Gastrocnemius medialis (tissue), 4 donors: ENCODE measurements at regions of chr4 and their contacts with region 1.

Region 1: GRCh38 chr4:69881173-69881773 is 21.3 kb upstream of the SULT1E1 start:
- DNase-seq: peak in 1 of 2 donors; percentile 2
- ATAC-seq: no peak
- H3K4me3 ChIP-seq: no peak overlapping the region
- H3K27ac ChIP-seq: no peak overlapping the region
- H3K4me1 ChIP-seq: no peaks in the 10 kb centered on the region
- H3K27me3 ChIP-seq: no peaks in the 10 kb centered on the region
- CTCF ChIP-seq: peak in 3 of 5 experiments; percentile 25 to 41 (median 31)
- POLR2A ChIP-seq: no peak

Region 2: DNA sequence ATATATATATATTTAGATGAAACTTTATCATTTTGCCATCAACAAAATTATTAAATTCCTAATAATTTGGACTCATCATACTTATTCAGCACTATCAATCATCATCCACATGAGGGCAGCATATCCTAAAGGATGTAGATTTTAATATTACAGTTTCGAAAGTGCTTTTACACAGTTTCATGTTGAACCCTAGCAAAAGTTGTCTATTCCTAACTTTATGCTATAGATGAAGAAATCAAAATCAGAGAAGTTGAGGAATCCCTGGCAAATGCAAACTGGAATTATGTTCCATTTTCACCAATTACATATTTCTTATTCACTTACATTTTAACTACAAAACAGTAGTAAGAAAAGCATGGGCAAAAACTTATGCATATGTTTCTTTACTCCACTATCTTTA is 191.7 kb before region 1 on chr4:
- in situ Hi-C with region 1: loop called in 3 of 4 experiments (anchors 5 to 25 kb)
- intact Hi-C with region 1: no loop called
- DNase-seq: no peak
- ATAC-seq: no peak
- H3K4me3 ChIP-seq: no peak overlapping the region
- H3K27ac ChIP-seq: no peak overlapping the region
- H3K4me1 ChIP-seq: no peaks in the 10 kb centered on the region
- H3K27me3 ChIP-seq: no peaks in the 10 kb centered on the region
- CTCF ChIP-seq: peak in 3 of 5 experiments; percentile 13 to 39 (median 15)
- POLR2A ChIP-seq: no peak

Region 3: DNA sequence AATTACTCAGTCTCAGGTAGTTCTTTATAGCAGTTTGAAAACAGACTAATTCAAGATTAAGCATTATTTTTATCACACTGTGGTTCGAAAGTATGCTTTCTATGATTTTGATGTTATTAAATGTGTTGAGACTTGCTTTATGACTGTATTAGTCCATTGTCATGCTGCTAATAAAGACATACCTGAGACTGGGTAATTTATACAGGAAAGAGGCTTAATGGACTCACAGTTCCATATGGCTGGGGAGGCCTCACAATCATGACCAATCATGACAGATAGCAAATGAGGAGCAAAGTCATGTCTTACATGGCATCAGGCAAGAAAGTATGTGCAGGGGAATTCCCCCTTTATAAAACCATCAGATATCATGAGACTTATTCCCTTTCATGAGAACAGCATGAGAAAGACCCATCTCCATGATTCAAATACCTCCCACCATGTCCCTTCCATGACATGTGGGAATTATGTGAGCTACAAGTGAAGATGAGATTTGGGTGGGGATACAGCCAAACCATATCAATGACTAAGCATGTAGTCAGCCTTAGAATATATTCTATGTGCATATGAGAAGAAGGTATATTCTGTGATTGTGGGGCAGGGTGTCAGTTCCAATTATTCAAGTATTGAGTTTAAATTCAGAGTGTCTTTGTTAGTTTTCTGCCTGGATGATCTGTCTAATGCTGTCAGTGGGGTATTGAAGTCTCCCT is 183.6 kb before region 1 on chr4:
- in situ Hi-C with region 1: loop called in 2 of 4 experiments (anchors 10 to 25 kb)
- intact Hi-C with region 1: no loop called
- DNase-seq: no peak
- ATAC-seq: no peak
- H3K4me3 ChIP-seq: no peak overlapping the region
- H3K27ac ChIP-seq: no peak overlapping the region
- H3K4me1 ChIP-seq: no peaks in the 10 kb centered on the region
- H3K27me3 ChIP-seq: no peaks in the 10 kb centered on the region
- CTCF ChIP-seq: no peak
- POLR2A ChIP-seq: no peak

Region 4: DNA sequence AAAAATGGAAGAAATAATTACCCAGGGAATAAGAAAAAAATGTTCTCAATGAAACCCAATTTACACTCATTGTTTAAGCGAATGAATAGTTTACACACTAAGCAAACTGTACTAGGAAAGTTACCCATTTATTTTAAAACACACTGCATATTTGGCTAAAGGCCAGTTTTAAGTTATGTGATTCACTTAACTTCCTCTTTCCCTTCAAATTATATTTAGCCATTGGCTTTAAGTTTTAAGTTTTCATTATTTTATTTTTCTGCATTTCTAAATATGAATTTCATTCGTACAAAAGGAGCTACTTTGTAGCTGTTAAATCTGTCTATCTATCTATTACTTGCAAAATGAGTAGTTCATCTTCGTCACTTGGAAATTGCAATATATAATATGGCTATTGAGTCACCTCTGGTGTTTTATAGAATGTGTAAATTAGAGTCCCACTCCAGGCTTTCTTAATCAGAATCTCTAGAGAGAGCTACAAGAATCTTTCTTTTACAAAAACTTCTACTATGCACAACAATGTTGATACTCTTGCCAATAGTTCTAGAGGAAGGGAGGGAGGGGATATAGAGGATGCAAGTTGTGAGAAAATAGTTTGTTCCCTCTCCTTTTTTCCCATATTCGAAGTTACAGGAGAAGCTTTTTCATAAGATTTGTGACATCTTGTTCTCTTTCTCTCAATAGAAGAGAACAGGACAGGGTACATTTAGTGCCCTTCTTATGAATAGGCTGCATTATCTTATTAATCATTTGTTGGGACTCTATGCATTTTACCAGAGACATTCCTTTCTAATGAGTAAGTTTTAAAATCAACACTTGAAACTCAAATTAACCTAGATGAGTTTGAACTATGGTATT is 162.6 kb before region 1 on chr4:
- in situ Hi-C with region 1: no loop called
- intact Hi-C with region 1: no loop called
- DNase-seq: no peak
- ATAC-seq: no peak
- H3K4me3 ChIP-seq: no peak overlapping the region
- H3K27ac ChIP-seq: no peak overlapping the region
- H3K4me1 ChIP-seq: no peaks in the 10 kb centered on the region
- H3K27me3 ChIP-seq: no peaks in the 10 kb centered on the region
- CTCF ChIP-seq: no peak
- POLR2A ChIP-seq: no peak